Dorsolateral prefrontal cortex (tissue), 120 donors: ENCODE measurements at regions of chr10 and their contacts with region 1.

Region 1: GRCh38 chr10:52313933-52314816 is at the start of gene DKK1:
- DNase-seq: peak in 9 of 10 donors; percentile 36 to 63 (median 52)
- H3K4me3 ChIP-seq: peak within 1 kb of the TSS; percentile 33 to 83 (median 65)
- H3K27ac ChIP-seq: peak within 1 kb of the TSS in 24 of 59 donors; percentile 0 to 74 (median 42)
- H3K27me3 ChIP-seq: peaks cover 0 to 16% (median 0%) of the 10 kb centered on the region in 45 donors
- CTCF ChIP-seq: peak in 53 of 56 donors; percentile 45 to 78 (median 65)
- total RNA-seq, gene DKK1: 0.27 to 13.2 (median 3.1) TPM

Region 2: GRCh38 chr10:52004342-52004949 is 309.7 kb before region 1 on chr10:
- intact Hi-C with region 1: no loop called
- DNase-seq: no peak
- H3K4me3 ChIP-seq: no peak overlapping the region
- H3K27ac ChIP-seq: no peak overlapping the region
- H3K27me3 ChIP-seq: peaks cover 0 to 4% (median 0%) of the 10 kb centered on the region in 45 donors
- CTCF ChIP-seq: peak in 54 of 56 donors; percentile 34 to 74 (median 62)

Region 3: DNA sequence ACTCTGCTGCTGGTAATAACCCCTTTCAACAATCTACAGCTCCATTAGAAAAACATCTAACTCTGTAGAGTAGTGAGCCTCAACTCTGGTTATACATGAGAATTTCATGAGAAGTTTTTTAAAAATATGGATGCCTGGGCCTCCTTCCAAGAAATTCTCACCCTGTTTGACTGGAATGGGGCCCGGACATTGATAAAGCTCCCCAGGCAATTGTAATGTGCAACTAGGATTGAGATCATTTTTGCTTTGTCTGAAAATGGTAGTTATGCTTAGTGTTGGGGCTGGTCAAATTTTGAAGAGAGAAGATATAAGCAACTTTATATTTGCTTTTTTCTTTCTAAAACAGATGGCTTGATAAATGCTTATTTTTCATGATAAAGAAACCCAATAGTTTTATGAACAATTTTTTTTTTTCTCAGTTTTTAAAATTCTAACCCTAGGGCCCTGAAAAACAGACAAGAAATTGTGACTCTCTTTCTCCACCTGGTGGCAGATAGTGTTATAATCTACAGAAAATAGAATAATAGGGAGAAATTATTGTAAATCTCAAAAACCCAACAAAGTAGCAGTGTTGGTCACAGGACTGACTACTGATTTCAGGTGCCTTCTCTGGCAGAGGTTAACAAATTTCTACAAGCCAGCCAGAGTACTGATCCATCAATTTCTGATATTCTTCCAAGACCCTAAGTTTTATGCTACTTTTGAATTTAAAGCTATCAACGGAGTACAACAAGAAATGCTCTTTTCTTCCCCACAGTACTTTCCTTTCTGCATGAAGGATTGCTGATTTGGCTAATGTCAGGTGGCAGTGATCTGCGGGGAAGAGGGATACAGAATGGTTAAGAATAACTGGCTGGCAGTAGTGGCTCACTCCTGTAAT is 174.7 kb after region 1 on chr10:
- intact Hi-C with region 1: loop called (anchors 2 to 5 kb)
- DNase-seq: no peak
- H3K4me3 ChIP-seq: no peak overlapping the region
- H3K27ac ChIP-seq: no peak overlapping the region
- H3K27me3 ChIP-seq: no peaks in the 10 kb centered on the region
- CTCF ChIP-seq: peak; percentile 54 to 91 (median 72)

Region 4: GRCh38 chr10:52652431-52653262 is 338.5 kb after region 1 on chr10:
- intact Hi-C with region 1: loop called (anchors 5 to 10 kb)
- DNase-seq: peak in 1 of 10 donors; percentile 55
- H3K4me3 ChIP-seq: peak overlapping the region in 13 of 59 donors; percentile 0 to 21 (median 9)
- H3K27ac ChIP-seq: peak overlapping the region; percentile 7 to 94 (median 85)
- H3K27me3 ChIP-seq: no peaks in the 10 kb centered on the region
- CTCF ChIP-seq: peak in 12 of 56 donors; percentile 4 to 34 (median 14)

Region 5: DNA sequence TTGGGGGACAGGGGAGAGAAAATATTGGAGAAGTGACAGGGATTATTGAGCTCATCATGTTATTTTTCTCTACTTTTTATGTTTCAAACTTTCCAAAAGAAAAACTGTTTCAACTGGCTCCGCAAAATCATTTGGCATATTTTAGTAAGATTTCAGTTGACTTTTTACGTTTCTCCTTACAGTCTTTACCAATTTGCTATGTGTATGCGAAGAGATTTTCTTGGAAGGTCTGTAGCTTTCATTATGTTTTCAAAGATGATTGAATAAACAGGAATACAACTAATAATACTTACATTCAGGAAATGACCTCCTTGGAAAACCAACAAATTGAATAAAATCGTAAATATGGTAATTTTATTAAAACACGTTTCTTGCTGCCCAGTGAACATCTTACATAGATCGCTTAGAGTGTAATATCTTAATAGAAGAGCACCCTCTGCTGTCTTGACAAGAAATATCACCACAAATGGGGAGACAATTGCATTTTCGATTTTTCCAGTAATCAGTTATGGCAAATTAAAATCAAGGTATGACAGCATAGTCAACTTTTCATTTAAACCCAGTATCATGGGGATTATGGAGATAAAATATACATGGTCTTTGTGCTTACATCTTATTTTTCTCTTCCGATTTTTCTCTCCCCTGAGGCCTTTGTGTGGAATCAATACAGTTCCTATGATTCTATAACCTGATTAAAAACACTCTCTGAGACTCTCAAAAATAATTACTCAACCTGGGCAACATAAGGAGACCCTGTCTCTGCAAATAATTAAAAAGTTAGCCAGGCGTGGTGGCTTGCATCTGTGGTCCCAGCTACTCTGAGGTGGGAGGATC is 415.3 kb after region 1 on chr10:
- intact Hi-C with region 1: loop called in 1 of 2 experiments (anchors 10 kb)
- DNase-seq: no peak
- H3K4me3 ChIP-seq: peak overlapping the region in 43 of 59 donors; percentile 7 to 54 (median 32)
- H3K27ac ChIP-seq: no peak overlapping the region
- H3K27me3 ChIP-seq: no peaks in the 10 kb centered on the region
- CTCF ChIP-seq: peak; percentile 35 to 88 (median 74)